ENCODE measurements at regions of chr11 and their contacts with region 1.

Region 1: GRCh38 chr11:118068206-118068944 is 8.5 kb upstream of the TMPRSS4 start:
- DNase-seq: no peak
- H3K4me3 ChIP-seq: no peak overlapping the region
- H3K27ac ChIP-seq: no peak overlapping the region
- H3K4me1 ChIP-seq: no peaks in the 10 kb centered on the region
- H3K27me3 ChIP-seq: no peaks in the 10 kb centered on the region
- CTCF ChIP-seq: no peak
- POLR2A ChIP-seq: no peak

Region 2: GRCh38 chr11:118010738-118011461 is 57.5 kb before region 1 on chr11:
- intact Hi-C with region 1: no loop called
- DNase-seq: peak in 1 of 2 donors; percentile 35
- H3K4me3 ChIP-seq: no peak overlapping the region
- H3K27ac ChIP-seq: peak overlapping the region; percentile 15 to 80
- H3K4me1 ChIP-seq: no peaks in the 10 kb centered on the region
- H3K27me3 ChIP-seq: no peaks in the 10 kb centered on the region
- CTCF ChIP-seq: no peak
- POLR2A ChIP-seq: no peak

Region 3: GRCh38 chr11:119067371-119068222 is 999.2 kb after region 1 on chr11 and contains the start of gene VPS11:
- intact Hi-C with region 1: no loop called
- DNase-seq: peak; percentile 97 to 98
- H3K4me3 ChIP-seq: peak within 1 kb of the TSS; percentile 71 to 92 (median 91)
- H3K27ac ChIP-seq: peak within 1 kb of the TSS; percentile 91
- H3K4me1 ChIP-seq: no peaks in the 10 kb centered on the region
- H3K27me3 ChIP-seq: no peaks in the 10 kb centered on the region
- CTCF ChIP-seq: no peak
- POLR2A ChIP-seq: peak; percentile 35
- total RNA-seq, gene VPS11: 38.0 to 53.9 (median 46.6) TPM

Region 4: GRCh38 chr11:119764901-119765300 is 1696.5 kb after region 1 on chr11:
- intact Hi-C with region 1: loop called (anchors 5 kb)
- DNase-seq: no peak
- H3K4me3 ChIP-seq: no peak overlapping the region
- H3K27ac ChIP-seq: peak overlapping the region in 1 of 2 donors; percentile 25
- H3K4me1 ChIP-seq: no peaks in the 10 kb centered on the region
- H3K27me3 ChIP-seq: peaks cover 0 to 6% of the 10 kb centered on the region in 2 donors
- CTCF ChIP-seq: no peak
- POLR2A ChIP-seq: no peak

Measured in breast epithelium (tissue), 4 donors.